ENCODE measurements at regions of chr12 and their contacts with region 1.

Region 1: DNA sequence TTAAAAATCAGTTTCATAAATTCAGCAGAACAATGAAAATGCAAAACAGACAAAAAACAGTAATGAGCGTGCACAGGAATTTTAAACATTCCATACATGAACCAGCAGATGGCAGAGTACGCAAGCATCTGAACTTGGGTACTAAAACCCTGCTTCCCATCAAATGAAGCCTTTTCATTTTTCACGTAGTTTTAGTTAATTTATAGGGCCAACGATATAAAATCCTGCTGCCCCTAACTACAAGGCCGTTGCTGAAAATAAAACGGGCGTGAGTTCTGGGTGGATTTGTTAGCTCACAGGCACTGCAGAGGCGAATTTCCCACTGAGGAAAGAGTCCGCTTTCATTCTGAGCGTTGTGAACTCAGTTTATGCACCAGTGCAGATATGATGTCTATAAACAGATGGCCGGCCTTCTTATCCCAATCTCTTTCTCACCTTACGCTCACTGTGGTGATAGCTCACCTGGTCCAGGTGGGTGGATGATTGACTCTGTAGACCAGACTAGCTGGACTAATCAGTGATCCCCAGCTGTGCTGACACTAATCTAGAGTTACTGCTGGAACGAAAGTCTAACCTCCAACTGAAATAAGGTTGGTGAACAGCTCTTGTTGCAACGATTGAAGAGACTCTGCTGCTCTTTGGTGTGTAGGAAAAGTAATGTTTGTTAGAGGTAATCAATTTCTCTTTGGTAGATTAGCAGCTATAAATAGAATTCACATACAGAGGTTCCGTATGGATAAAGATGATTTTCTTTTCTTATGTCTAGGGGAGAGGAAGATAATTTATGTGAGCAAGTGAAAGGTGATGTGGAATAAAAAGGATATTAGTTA is 89.2 kb downstream of the PDZRN4 start:
- H3K4me3 Mint-ChIP-seq: no peak overlapping the region
- H3K27ac Mint-ChIP-seq: no peak overlapping the region
- H3K4me1 Mint-ChIP-seq: no peaks in the 10 kb centered on the region
- H3K27me3 Mint-ChIP-seq: no peaks in the 10 kb centered on the region

Region 2: DNA sequence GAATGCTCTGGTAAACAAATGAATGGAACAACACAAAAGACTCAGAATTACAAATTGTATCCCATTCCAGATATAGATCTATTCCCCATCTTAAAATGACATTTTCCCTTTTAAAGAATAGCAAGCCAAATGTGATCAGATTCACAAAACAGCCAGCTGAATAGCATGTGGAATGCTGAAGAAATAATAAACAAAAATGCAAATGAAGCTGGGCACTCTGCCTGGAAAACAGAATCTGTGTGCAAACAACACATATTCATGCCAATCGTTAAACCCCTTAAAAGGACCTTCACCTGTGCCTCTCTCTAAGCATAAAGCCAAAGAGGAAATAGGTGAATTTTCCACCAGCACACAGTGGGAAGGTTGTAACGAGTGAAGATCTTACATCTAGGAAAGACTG is 157.1 kb before region 1 on chr12:
- intact Hi-C with region 1: no loop called
- H3K4me3 Mint-ChIP-seq: no peak overlapping the region
- H3K27ac Mint-ChIP-seq: no peak overlapping the region
- H3K4me1 Mint-ChIP-seq: no peaks in the 10 kb centered on the region
- H3K27me3 Mint-ChIP-seq: no peaks in the 10 kb centered on the region

Region 3: GRCh38 chr12:41663598-41664258 is 386.4 kb after region 1 on chr12:
- intact Hi-C with region 1: loop called (anchors 2 kb)
- H3K4me3 Mint-ChIP-seq: no peak overlapping the region
- H3K27ac Mint-ChIP-seq: no peak overlapping the region
- H3K4me1 Mint-ChIP-seq: no peaks in the 10 kb centered on the region
- H3K27me3 Mint-ChIP-seq: no peaks in the 10 kb centered on the region

Region 4: DNA sequence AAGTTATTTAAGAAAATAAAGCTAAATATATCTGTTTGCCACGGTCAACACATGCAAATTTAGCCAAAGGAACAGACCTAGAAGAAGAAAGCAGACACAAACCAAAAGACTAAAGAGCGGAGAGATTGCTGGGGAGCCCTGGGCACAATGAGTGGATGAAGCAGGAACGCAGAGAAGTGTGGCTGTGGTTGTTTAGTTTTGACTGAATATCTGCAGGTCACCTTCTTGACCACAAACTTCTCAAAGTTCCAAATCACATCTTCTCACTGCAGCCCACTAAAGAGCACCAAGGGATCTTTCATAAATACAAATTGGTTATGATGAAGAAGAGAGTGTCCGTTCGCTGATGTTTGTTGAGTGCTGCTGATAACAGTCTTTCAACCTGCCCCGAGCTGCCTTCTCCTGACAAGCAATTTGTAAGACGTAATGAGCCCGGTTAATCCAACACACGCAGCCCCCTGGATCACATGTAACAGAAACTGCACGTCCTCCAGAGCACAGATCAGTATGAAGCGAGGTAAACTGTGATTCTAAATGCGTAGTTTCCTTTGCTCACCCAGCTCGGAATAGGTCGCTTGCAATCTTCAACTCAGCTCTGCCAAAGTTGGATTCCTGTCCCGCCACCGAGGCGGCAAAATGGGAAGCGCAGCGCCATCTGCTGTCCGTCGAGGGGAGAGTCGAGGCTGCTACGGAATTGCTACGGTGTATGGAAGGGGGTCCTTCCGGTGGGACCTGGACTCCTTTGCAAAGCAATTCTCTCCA is 746.6 kb after region 1 on chr12:
- intact Hi-C with region 1: loop called (anchors 1 kb)
- H3K4me3 Mint-ChIP-seq: peak overlapping the region; percentile 60
- H3K27ac Mint-ChIP-seq: no peak overlapping the region
- H3K4me1 Mint-ChIP-seq: peaks cover 18% of the 10 kb centered on the region
- H3K27me3 Mint-ChIP-seq: peaks cover 9% of the 10 kb centered on the region

Region 5: DNA sequence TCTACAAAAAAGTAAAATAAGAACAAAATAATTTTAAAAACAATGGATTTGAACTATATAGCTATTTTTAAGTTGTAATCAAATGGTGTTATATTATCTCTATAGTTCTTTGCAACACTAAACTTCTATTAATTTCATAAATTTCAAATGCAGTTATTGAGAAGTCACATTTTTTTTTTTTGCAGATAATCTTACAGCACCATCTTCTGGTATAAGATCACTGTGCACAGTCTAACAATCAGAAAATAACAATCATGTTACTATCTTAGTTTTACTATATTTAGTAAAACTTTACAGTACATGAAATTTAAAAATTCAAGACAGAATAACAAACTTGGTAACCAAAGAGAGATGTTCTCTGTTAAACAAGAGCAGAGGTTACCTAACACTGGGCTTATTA is 826.8 kb after region 1 on chr12:
- intact Hi-C with region 1: loop called (anchors 5 kb)
- H3K4me3 Mint-ChIP-seq: no peak overlapping the region
- H3K27ac Mint-ChIP-seq: no peak overlapping the region
- H3K4me1 Mint-ChIP-seq: no peaks in the 10 kb centered on the region
- H3K27me3 Mint-ChIP-seq: no peaks in the 10 kb centered on the region

Region 6: DNA sequence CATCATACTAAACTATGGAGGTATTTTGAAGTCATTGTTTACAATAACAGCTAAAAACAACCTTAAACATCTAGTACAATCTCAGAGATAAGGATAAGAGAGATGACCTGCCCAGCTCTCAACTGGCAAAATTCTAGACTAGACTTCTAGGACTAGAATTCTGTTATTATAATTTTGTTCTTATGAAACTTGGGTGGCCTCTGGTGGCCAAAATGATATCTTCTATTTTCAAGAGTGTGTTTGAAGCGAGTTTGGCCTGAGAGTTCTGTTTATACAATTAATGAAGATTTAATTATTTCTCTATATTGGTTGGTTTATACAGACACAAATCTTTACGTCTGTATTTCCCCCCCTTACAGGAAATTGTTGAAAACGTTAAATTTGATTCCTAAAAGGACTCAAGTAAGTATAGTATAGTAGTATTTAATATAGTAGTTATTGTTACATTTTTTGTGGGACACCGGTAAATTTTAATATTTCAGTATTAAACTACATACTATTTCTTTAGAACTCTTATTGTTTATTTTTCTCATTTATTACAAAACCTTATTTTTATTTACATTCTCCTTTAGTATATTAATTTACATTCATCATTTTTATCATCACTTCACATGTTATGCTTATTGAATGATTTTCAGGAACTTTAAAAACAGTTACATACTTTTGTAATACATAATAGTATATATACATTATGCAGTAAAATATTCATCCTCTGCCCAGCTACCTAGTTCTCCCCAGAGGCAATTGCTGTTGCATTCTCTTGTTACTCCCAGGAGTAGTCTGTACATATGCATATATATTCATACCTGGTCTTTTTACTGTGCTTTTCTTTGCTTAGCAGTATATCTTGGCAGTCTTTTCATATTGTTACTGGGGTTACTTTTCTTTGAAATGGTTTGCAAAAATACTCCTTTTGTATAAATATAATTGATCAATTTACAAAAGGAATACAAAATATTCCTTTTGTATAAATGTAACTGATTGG is 1055.3 kb after region 1 on chr12:
- intact Hi-C with region 1: loop called (anchors 5 kb)
- H3K4me3 Mint-ChIP-seq: no peak overlapping the region
- H3K27ac Mint-ChIP-seq: no peak overlapping the region
- H3K4me1 Mint-ChIP-seq: peaks cover 48% of the 10 kb centered on the region
- H3K27me3 Mint-ChIP-seq: no peaks in the 10 kb centered on the region

Region 7: DNA sequence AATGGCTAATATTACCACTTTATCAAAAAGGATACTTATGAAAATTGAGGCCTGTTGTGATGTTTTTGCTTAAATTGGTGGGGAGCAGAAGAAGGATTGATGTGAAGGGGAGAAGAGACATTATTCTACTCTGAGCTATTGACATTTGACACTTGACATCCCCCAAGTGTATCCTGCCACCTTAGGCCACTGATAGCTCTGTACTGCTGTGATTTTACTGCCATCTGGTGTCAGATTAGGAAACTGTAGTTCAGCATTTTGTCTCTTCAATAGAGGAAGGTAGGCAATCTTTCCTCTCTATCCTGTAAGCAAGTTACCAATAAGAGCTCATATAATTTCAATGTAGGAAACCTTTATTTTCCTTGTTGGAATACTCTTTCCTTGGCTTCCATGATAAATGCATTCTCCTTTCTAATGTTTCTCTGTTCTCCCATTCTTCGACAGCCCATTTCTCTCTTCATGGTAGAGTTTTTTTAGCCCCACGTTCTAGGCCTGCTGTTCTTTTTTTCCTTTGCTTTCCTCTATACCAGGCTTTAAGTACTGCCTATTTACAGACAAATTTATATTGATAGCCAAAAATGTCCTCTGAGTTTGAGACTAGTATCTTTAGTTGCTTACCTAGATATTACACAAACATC is 1094.9 kb after region 1 on chr12:
- intact Hi-C with region 1: loop called (anchors 10 kb)
- H3K4me3 Mint-ChIP-seq: no peak overlapping the region
- H3K27ac Mint-ChIP-seq: no peak overlapping the region
- H3K4me1 Mint-ChIP-seq: peaks cover 7% of the 10 kb centered on the region
- H3K27me3 Mint-ChIP-seq: no peaks in the 10 kb centered on the region